Activated naive CD4-positive, alpha-beta T cell treated with anti-CD3 and anti-CD28 coated beads for 36 hours (primary cell): ENCODE measurements at regions of chr1 and their contacts with region 1.

Region 1: GRCh38 chr1:40774266-40774998 is 9.2 kb upstream of the KCNQ4 start:
- DNase-seq: peak; percentile 79
- H3K4me3 Mint-ChIP-seq: no peak overlapping the region
- H3K27ac Mint-ChIP-seq: no peak overlapping the region
- H3K4me1 Mint-ChIP-seq: no peaks in the 10 kb centered on the region
- H3K27me3 Mint-ChIP-seq: no peaks in the 10 kb centered on the region

Region 2: GRCh38 chr1:40625066-40625465 is 149.4 kb before region 1 on chr1:
- CTCF ChIA-PET with region 1: interaction called, 3 read pairs
- intact Hi-C with region 1: loop called (anchors 5 kb)
- DNase-seq: peak; percentile 58
- H3K4me3 Mint-ChIP-seq: no peak overlapping the region
- H3K27ac Mint-ChIP-seq: no peak overlapping the region
- H3K4me1 Mint-ChIP-seq: peaks cover 20% of the 10 kb centered on the region
- H3K27me3 Mint-ChIP-seq: no peaks in the 10 kb centered on the region

Region 3: DNA sequence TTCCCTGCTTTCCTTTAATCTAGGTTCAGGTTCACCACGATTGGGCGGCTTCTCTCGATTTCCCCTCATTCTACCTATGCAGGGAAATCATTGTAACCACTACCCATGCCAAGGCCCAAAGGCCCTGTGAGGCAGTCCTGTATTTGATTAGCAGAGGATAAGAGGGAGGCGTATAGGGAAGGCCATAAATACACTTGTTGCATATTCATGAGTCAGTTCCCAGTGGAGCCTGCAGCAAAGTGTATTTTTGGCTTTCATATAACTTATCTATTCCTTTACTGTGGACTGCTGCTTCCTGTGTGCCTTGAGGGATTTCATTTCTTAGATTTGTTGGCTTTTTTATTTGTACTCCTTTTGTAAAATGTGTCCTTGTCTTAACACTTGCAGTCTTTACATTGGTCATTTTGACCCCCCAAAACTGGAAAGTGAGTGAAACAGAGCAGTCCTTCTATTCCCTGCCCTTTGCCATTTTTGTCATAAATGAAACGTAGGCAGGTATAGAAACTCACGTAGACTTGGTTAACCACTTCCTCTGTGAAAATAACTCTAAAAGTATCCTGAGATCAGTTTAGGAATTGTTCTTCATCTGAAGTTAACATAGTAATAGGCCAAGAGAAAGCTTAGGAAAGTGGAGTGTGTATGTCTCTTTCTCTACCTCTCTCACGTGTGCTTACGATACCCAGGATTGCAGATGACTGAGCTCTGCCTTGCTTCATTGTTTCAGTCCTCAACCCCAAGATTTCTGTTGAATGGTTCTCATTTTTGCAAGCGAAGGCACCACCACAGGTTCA is 10.5 kb before region 1 on chr1:
- CTCF ChIA-PET with region 1: interaction called, 47 read pairs
- intact Hi-C with region 1: no loop called
- DNase-seq: no peak
- H3K4me3 Mint-ChIP-seq: no peak overlapping the region
- H3K27ac Mint-ChIP-seq: peak overlapping the region; percentile 73
- H3K4me1 Mint-ChIP-seq: peaks cover 34% of the 10 kb centered on the region
- H3K27me3 Mint-ChIP-seq: no peaks in the 10 kb centered on the region

Region 4: GRCh38 chr1:40825435-40825788 is 51.0 kb after region 1 on chr1:
- CTCF ChIA-PET with region 1: interaction called, 12 read pairs
- intact Hi-C with region 1: no loop called
- DNase-seq: peak; percentile 45
- H3K4me3 Mint-ChIP-seq: no peak overlapping the region
- H3K27ac Mint-ChIP-seq: no peak overlapping the region
- H3K4me1 Mint-ChIP-seq: peaks cover 13% of the 10 kb centered on the region
- H3K27me3 Mint-ChIP-seq: no peaks in the 10 kb centered on the region

Region 5: GRCh38 chr1:40840526-40841323 is 66.3 kb after region 1 on chr1:
- CTCF ChIA-PET with region 1: interaction called, 8 read pairs
- intact Hi-C with region 1: loop called (anchors 2 kb)
- DNase-seq: no peak
- H3K4me3 Mint-ChIP-seq: no peak overlapping the region
- H3K27ac Mint-ChIP-seq: no peak overlapping the region
- H3K4me1 Mint-ChIP-seq: peaks cover 32% of the 10 kb centered on the region
- H3K27me3 Mint-ChIP-seq: no peaks in the 10 kb centered on the region

Region 6: GRCh38 chr1:40855513-40855912 is 81.1 kb after region 1 on chr1:
- CTCF ChIA-PET with region 1: interaction called, 115 read pairs
- intact Hi-C with region 1: loop called (anchors 1 kb)
- DNase-seq: peak; percentile 27
- H3K4me3 Mint-ChIP-seq: no peak overlapping the region
- H3K27ac Mint-ChIP-seq: no peak overlapping the region
- H3K4me1 Mint-ChIP-seq: no peaks in the 10 kb centered on the region
- H3K27me3 Mint-ChIP-seq: peaks cover 4% of the 10 kb centered on the region

Region 7: GRCh38 chr1:41529621-41530395 is 755.4 kb after region 1 on chr1:
- CTCF ChIA-PET with region 1: no interaction called
- intact Hi-C with region 1: no loop called
- DNase-seq: no peak
- H3K4me3 Mint-ChIP-seq: no peak overlapping the region
- H3K27ac Mint-ChIP-seq: no peak overlapping the region
- H3K4me1 Mint-ChIP-seq: no peaks in the 10 kb centered on the region
- H3K27me3 Mint-ChIP-seq: no peaks in the 10 kb centered on the region